GM12878 (cell line): ENCODE measurements at regions of chr10 and their contacts with region 1.

Region 1: GRCh38 chr10:30583778-30584415 is 45.7 kb downstream of the LYZL2 start:
- DNase-seq: peak; percentile 61
- ATAC-seq: peak; percentile 75
- H3K4me3 ChIP-seq: peak overlapping the region; percentile 54
- H3K27ac ChIP-seq: peak overlapping the region; percentile 39
- H3K4me1 ChIP-seq: peaks cover 22% of the 10 kb centered on the region
- H3K27me3 ChIP-seq: no peaks in the 10 kb centered on the region
- CTCF ChIP-seq: no peak
- EP300 ChIP-seq: no peak
- POLR2A ChIP-seq: no peak
- RAD21 ChIP-seq: no peak

Region 2: GRCh38 chr10:30359373-30360206 is 224.3 kb before region 1 on chr10:
- CTCF ChIA-PET with region 1: interaction called, 142 read pairs
- POLR2A ChIA-PET with region 1: no interaction called
- RAD21 ChIA-PET with region 1: interaction called, 7 read pairs
- SMC1A ChIA-PET with region 1: interaction called, 3 read pairs
- in situ Hi-C with region 1: no loop called
- intact Hi-C with region 1: no loop called
- DNase-seq: peak; percentile 39
- ATAC-seq: peak; percentile 97
- H3K4me3 ChIP-seq: no peak overlapping the region
- H3K27ac ChIP-seq: no peak overlapping the region
- H3K4me1 ChIP-seq: peaks cover 4% of the 10 kb centered on the region
- H3K27me3 ChIP-seq: no peaks in the 10 kb centered on the region
- CTCF ChIP-seq: peak; percentile 72 to 98 (median 95)
- EP300 ChIP-seq: no peak
- POLR2A ChIP-seq: no peak
- RAD21 ChIP-seq: peak; percentile 53

Region 3: GRCh38 chr10:30392564-30392990 is 191.3 kb before region 1 on chr10:
- CTCF ChIA-PET with region 1: interaction called, 221 read pairs
- POLR2A ChIA-PET with region 1: no interaction called
- RAD21 ChIA-PET with region 1: interaction called, 3 read pairs
- SMC1A ChIA-PET with region 1: interaction called, 8 read pairs
- in situ Hi-C with region 1: no loop called
- intact Hi-C with region 1: loop called (anchors 1 kb)
- DNase-seq: peak; percentile 31
- ATAC-seq: peak; percentile 100
- H3K4me3 ChIP-seq: no peak overlapping the region
- H3K27ac ChIP-seq: no peak overlapping the region
- H3K4me1 ChIP-seq: no peaks in the 10 kb centered on the region
- H3K27me3 ChIP-seq: no peaks in the 10 kb centered on the region
- CTCF ChIP-seq: peak; percentile 81 to 100 (median 97); a peak in 5 of 6 replicates
- EP300 ChIP-seq: no peak
- POLR2A ChIP-seq: no peak
- RAD21 ChIP-seq: peak; percentile 97

Region 4: DNA sequence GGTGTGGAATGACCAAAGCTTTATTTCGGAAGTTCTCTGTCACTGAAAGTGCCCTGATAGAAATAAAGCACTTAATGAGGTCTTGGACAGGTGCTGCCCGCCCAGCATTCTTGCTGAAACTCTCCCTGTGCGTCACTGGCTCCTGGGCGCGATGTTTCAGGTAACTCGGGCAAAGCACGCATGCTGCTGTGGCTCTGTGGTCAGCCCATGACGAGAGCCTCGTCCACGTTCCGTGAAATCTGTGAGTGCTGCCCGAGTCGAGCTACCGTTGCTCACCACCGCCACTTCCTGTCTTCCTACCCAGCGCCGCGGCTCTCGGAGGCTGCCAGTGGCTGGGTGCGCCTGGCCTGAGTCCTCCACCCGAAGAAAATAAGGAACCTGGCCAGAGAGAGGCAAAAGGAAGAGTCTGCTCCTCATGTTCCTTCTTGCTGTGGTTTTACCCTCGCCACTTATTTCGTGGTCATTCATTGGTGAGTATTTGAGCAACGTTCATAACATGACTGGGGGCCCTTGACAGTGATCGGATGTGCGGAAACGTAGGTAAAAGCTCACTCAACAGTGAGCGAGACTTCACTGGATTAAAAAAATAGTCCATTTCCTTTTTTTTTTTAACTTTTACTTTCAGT is 54.4 kb before region 1 on chr10:
- CTCF ChIA-PET with region 1: interaction called, 35 read pairs
- POLR2A ChIA-PET with region 1: interaction called, 3 read pairs
- RAD21 ChIA-PET with region 1: interaction called, 6 read pairs
- SMC1A ChIA-PET with region 1: interaction called, 11 read pairs
- in situ Hi-C with region 1: no loop called
- intact Hi-C with region 1: no loop called
- DNase-seq: peak; percentile 77
- ATAC-seq: peak; percentile 87
- H3K4me3 ChIP-seq: peak overlapping the region; percentile 48
- H3K27ac ChIP-seq: peak overlapping the region; percentile 97
- H3K4me1 ChIP-seq: peaks cover 33% of the 10 kb centered on the region
- H3K27me3 ChIP-seq: no peaks in the 10 kb centered on the region
- CTCF ChIP-seq: no peak
- EP300 ChIP-seq: peak; percentile 97 to 99; a peak in 3 of 4 replicates
- POLR2A ChIP-seq: peak; percentile 88
- RAD21 ChIP-seq: 0 out of 2 replicates have a peak, but pooled peaks have one; percentile 11

Region 5: DNA sequence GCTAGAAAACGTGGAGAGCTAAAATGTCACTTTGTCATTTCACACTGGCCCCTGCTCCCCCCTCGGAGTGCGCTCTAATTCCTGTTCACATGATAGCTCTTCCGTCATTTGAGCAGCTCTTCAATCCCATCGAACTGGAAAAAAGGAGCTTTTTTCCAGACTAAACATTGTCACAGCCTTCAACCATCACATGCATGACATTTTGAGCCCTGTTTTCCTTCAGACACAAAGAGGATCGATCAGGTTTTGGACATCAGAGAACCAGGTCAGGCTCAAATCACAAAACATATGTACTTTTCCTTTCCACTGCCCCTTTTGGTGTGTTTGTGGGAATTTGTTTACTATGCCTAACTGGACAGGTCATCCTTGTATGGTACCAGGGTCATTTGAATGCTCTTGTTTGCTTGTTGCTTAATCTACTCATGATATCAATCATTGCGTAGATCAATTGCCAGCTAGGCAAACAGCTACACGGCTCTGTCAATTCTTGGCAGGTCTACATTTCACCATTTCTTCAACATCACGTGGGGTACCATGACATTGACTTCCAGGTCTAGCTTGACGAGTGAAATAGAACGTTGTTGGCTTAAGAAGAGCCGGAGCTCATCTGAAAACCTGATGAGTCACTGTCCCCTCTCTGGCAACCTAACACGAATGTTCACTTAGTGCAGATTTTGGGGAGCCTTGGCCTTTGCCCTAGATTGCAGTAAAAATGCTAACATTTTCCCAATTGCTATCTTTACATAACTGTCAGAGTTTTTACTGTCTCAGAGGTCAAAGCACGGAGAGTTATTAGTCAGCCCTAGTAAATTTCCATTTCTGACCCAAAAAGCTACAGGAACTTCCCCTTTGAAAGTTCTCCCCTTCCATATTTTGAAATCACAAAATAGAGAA is 41.6 kb before region 1 on chr10:
- CTCF ChIA-PET with region 1: interaction called, 42 read pairs
- POLR2A ChIA-PET with region 1: interaction called, 4 read pairs
- RAD21 ChIA-PET with region 1: interaction called, 7 read pairs
- SMC1A ChIA-PET with region 1: interaction called, 41 read pairs
- in situ Hi-C with region 1: no loop called
- intact Hi-C with region 1: loop called (anchors 2 kb)
- DNase-seq: no peak
- ATAC-seq: peak; percentile 68
- H3K4me3 ChIP-seq: peak overlapping the region; percentile 19; the same call in 1 of the 2 replicates
- H3K27ac ChIP-seq: peak overlapping the region; percentile 39
- H3K4me1 ChIP-seq: peaks cover 30% of the 10 kb centered on the region
- H3K27me3 ChIP-seq: no peaks in the 10 kb centered on the region
- CTCF ChIP-seq: no peak
- EP300 ChIP-seq: peak in 1 of 2 experiments; percentile 27; a peak in 1 of 4 replicates
- POLR2A ChIP-seq: no peak
- RAD21 ChIP-seq: no peak

Region 6: GRCh38 chr10:30562787-30563186 is 21.1 kb before region 1 on chr10:
- CTCF ChIA-PET with region 1: interaction called, 30 read pairs
- POLR2A ChIA-PET with region 1: no interaction called
- RAD21 ChIA-PET with region 1: no interaction called
- SMC1A ChIA-PET with region 1: interaction called, 3 read pairs
- in situ Hi-C with region 1: no loop called
- intact Hi-C with region 1: no loop called
- DNase-seq: no peak
- ATAC-seq: peak; percentile 60
- H3K4me3 ChIP-seq: no peak overlapping the region
- H3K27ac ChIP-seq: no peak overlapping the region
- H3K4me1 ChIP-seq: no peaks in the 10 kb centered on the region
- H3K27me3 ChIP-seq: no peaks in the 10 kb centered on the region; a peak in 1 of 4 replicates
- CTCF ChIP-seq: no peak
- EP300 ChIP-seq: no peak
- POLR2A ChIP-seq: no peak
- RAD21 ChIP-seq: no peak